Activated T-helper 1 cell treated with anti-CD3 and anti-CD28 coated beads, Interleukin-12 subunit alpha, Interleukin-12 subunit beta, Interleukin-2, Interleukin-4 antibody, amounts not matched to agents 30 ng/mL and 10 ng/mL and 1 ng/mL, durations not matched to agents 14 hours and 24 hours and 36 hours (primary cell): ENCODE measurements at regions of chr5 and their contacts with region 1.

Region 1: DNA sequence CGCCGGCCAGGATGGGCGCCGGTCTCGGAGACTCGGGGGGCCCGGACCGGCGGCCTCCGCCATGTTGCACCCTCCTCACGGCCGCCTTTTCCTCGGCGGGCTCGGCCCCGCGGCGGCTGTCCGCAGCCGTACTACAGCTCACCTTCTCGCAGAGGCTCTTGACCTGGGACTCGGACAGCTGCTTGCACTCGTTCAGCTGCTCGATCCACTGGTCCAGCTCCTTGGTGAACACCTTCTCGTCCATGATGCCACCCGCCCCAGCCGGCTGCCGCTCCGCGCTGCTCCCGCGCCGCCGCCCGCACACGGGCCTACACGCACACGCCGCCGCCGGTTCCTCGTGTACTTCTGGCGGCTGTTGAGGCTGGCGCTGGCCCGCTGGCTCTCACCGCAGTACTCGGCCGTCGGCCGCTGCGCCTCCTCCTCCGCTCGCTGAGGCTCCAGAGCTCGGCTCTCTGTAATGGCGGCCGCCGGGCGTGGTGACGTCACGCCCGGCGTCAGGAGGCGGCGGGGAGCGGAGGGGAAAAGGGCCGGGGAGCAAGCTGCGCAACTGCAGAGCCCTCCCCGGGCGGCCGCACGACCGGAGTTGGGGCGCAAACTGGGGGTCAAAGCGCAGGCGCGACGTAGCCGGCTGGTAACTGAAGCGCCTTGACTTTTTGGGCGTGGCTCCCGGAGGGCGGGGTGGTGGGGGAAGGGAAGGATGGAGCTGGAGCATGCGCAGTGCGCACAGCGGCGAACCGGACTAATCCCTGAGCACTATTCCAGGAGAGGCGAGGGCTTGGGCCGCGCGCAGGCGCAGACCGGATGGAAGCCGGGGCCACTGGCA is at the start of gene PPP2CA:
- DNase-seq: peak; percentile 99
- H3K4me3 Mint-ChIP-seq: peak within 1 kb of the TSS; percentile 94
- H3K27ac Mint-ChIP-seq: peak within 1 kb of the TSS; percentile 97
- H3K4me1 Mint-ChIP-seq: peaks cover 46% of the 10 kb centered on the region
- H3K27me3 Mint-ChIP-seq: no peaks in the 10 kb centered on the region
- total RNA-seq, gene PPP2CA: 181 and 183 TPM in 2 replicates

Region 2: GRCh38 chr5:133968049-133968980 is 257.5 kb before region 1 on chr5 and contains the start of gene C5orf15:
- intact Hi-C with region 1: loop called (anchors 2 kb)
- DNase-seq: peak; percentile 92
- H3K4me3 Mint-ChIP-seq: peak within 1 kb of the TSS; percentile 98
- H3K27ac Mint-ChIP-seq: peak within 1 kb of the TSS; percentile 96
- H3K4me1 Mint-ChIP-seq: peaks cover 55% of the 10 kb centered on the region
- H3K27me3 Mint-ChIP-seq: no peaks in the 10 kb centered on the region
- total RNA-seq, gene C5orf15: 50.0 and 50.8 TPM in 2 replicates

Region 3: DNA sequence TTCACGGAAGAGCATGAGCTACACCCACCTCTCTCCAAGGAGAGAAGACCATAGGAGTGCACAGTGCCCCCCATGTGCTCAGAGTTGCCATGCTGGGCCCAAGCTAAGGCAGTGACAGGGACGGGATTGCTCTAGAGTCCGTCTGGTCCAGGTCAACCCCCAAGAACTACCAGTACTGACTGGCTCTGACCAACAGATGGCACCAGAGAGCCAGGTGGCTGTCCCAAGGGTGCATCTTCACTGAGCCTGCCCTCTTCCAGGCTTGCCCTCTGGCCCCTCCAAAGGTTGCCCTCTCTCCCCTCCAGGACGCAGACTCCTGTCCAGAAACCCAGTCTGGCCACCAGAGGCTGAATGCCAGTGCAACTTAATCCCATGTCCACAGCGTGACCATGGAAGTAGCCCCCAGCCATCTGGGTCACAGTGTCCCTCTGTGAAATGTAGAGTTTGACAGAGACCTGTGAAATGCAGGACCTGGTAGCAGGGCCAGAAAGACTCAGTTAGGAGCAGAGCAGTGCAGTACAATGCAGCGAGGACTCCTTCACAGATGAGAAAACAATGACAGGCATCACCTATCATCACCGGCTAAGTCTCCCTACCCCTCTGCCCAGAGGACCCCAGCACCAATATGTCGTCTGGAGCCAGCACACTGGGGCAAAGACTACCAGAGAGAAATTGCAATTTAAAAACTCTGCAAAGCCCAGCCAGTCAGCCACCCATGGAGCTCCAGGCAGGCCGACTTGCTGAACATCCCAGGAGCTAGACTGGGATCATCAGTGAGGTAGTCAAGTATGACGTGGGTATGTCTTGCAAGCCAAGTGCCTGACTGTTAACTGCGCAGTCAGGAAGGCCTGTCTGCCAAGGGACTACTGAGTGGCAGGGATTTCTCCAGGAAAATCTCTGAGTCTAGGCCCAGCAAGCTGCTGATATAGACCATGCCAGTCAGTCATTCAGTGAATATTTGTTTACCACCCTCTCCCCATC is 41.4 kb before region 1 on chr5:
- intact Hi-C with region 1: loop called (anchors 2 kb)
- DNase-seq: peak; percentile 67
- H3K4me3 Mint-ChIP-seq: no peak overlapping the region
- H3K27ac Mint-ChIP-seq: no peak overlapping the region
- H3K4me1 Mint-ChIP-seq: no peaks in the 10 kb centered on the region
- H3K27me3 Mint-ChIP-seq: peaks cover 8% of the 10 kb centered on the region

Region 4: DNA sequence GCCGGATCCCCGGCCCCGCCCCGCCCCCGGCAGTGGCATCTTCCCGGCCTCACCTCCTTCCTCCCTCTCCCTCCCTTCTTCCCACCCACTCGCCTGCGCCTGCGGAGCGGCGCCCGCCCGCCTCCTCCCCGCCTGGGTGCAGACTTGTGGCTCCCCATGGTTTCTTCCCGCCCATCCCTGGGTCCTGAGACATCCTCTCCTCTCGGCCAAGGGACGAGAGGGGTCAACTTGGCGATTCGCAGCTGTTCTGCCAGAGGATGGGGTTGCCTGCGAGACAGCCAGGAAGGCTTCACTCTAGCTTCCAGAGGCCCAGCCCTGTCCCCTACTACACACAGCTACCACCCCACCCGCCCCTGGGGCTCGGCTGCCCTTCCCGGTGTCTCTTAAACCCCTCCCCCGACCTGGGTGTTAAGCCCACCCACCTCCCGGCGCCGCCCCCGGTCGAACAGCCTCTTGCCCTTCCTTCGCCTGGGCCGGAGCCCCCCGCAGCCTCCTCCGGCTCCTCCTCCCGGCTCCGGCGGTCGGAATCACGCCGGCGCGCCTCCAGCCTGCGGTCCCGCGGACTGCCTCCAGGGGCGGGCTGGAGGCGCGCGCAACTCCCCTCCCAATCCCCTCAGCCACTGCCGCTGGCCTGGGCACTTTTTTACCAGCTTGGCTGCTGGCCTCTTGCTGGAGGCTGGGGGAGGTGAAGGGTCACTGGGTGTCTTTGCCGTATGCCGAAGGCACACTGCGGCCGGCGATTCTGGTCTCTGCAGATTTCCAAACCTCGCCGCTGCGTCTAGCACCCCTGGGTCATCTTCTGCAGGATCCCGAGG is 301.5 kb after region 1 on chr5:
- intact Hi-C with region 1: loop called (anchors 1 kb)
- DNase-seq: peak; percentile 63
- H3K4me3 Mint-ChIP-seq: peak overlapping the region; percentile 99
- H3K27ac Mint-ChIP-seq: peak overlapping the region; percentile 95
- H3K4me1 Mint-ChIP-seq: peaks cover 38% of the 10 kb centered on the region
- H3K27me3 Mint-ChIP-seq: peaks cover 2% of the 10 kb centered on the region

Region 5: GRCh38 chr5:134738133-134738962 is 512.5 kb after region 1 on chr5 and contains the start of gene CAMLG:
- intact Hi-C with region 1: loop called (anchors 1 kb)
- DNase-seq: peak; percentile 98
- H3K4me3 Mint-ChIP-seq: peak within 1 kb of the TSS; percentile 94
- H3K27ac Mint-ChIP-seq: peak within 1 kb of the TSS; percentile 90
- H3K4me1 Mint-ChIP-seq: peaks cover 32% of the 10 kb centered on the region
- H3K27me3 Mint-ChIP-seq: no peaks in the 10 kb centered on the region
- total RNA-seq, gene CAMLG: 25.9 and 26.9 TPM in 2 replicates

Region 6: DNA sequence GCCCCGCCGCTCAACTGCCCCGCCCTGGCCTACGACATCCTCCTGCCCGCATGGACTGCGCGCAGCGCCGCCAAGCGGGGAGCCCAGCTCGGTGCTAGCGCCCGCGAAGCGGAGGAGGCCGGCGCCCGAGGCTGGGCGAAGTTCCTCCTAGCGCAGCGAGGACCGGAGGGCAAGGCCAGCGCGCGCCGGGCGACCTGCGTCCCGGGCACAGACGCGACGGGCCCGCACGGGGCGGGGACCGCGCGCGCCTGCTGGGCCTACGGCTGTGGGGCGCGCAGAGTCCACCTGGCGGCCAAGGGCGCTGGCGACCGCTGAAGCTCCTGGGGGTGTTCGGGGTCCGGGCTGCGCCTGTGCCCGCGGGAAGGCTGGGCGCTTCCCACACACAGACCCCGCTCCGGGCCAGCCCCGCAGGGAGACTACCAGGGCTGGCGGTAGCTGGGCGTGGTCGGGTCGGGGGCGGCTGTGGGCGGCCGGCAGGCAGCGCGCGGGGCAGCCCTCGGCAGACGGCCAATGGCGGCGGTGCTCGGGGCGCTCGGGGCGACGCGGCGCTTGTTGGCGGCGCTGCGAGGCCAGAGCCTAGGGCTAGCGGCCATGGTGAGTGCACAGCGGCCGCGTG is 678.9 kb after region 1 on chr5 and contains the start of gene PCBD2:
- intact Hi-C with region 1: loop called (anchors 10 kb)
- DNase-seq: peak; percentile 91
- H3K4me3 Mint-ChIP-seq: peak within 1 kb of the TSS; percentile 94
- H3K27ac Mint-ChIP-seq: peak within 1 kb of the TSS; percentile 99
- H3K4me1 Mint-ChIP-seq: peaks cover 15% of the 10 kb centered on the region
- H3K27me3 Mint-ChIP-seq: no peaks in the 10 kb centered on the region
- total RNA-seq, gene PCBD2: 13.5 and 17.2 TPM in 2 replicates